ENCODE measurements at regions of chr12 and their contacts with region 1.

Region 1: GRCh38 chr12:52029686-52030085 is 21.6 kb upstream of the NR4A1 start:
- DNase-seq: peak; percentile 72
- ATAC-seq: peak; percentile 15

Region 2: DNA sequence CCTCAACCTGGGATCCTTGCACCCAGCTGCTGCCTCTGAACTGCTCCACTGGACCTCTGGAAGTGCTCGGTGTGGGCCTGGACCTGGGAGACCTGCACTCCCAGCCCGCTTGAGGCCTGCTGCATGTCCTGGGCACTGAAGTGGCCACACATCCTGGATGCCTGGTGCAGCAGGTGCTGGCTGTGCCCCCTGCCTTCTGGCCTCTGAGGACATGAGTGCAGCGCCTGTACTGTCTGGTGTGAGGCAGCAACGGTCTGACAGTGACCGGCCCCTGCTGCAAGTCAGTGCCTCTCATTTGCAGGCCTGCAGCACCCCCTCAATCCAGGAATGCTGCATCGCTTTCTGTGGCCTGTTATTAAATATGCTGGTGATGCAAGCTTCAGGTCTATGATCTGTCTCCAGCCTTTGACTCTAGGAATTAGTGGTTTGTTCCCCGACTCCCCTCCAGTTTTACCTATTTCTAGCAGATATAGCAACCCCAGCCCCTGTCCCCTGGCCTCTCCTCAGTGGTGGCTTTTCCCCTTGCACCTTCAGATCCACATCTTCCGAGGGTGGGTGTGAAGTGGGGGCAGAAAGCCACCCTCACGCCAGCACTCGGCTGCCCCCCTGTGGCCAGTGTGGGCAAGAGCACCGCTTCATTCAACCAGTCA is 53.4 kb after region 1 on chr12:
- intact Hi-C with region 1: loop called (anchors 5 kb)
- DNase-seq: peak; percentile 75
- ATAC-seq: peak; percentile 55

Measured in left ventricle myocardium superior (tissue), 1 donor.